T-cell (primary cell): ENCODE measurements at regions of chr11 and their contacts with region 1.

Region 1: DNA sequence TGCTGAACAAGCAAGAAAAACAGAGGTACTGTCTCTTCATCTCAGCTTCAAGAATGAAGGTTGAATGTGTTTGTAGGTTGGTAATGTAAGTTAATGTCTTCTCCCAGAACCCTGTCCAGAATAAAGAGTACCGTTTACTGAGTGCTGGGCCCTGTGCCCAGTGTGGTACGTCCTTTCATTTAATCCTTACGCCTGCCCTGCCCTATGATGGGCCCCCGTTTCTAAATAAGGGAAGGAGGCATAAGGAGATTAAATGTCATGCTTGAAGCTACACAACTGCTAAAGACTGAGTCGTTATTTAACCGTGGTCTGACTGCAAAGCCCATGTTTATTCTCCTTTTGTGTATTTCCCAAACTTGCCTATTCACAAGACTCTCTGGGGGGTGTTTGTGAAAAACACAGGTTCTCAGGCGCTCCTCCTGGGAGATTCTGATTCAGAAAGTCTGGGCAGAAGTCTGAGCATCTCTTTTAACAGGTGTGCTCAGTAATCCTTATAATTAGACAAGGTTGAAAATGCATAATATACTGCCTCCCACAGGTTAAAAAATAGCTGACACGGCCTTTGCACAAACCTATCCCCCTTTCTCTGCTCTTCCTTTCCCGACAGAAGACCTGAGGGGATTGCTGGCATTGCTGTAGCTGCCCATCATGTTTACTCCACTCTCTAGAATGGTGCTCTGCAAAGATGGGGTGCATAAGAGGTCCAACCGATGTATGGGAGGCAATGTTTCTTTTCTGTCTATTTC is 56.3 kb upstream of the ZBTB44 start:
- DNase-seq: peak in 1 of 35 experiments; percentile 14
- ATAC-seq: no peak
- H3K4me3 ChIP-seq: no peak overlapping the region
- H3K4me3 Mint-ChIP-seq: no peak overlapping the region
- H3K27ac ChIP-seq: no peak overlapping the region
- H3K27ac Mint-ChIP-seq: no peak overlapping the region
- H3K4me1 ChIP-seq: no peaks in the 10 kb centered on the region
- H3K4me1 Mint-ChIP-seq: no peaks in the 10 kb centered on the region
- H3K27me3 ChIP-seq: peaks cover 0 to 5% of the 10 kb centered on the region in 2 experiments
- H3K27me3 Mint-ChIP-seq: peaks cover 3 to 10% of the 10 kb centered on the region in 2 donors

Region 2: DNA sequence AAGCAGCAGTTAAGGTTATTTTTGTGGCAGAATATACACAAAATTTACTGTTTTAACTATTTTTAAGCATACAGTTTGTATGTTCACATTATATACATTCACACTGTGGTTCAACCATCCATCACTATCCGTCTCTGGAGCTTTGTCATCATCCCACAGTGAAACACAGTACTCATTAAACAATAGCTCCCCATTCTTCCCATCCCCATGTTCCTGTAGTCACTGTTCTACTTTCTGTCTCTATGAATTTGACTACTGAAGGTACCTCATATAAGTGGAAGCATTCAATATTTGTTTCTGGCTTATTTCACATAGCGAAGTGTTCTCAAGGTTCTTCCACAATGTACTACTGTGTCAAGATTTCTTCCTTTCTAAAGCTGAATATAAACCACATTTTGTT is 88.9 kb before region 1 on chr11:
- CTCF ChIA-PET with region 1: interaction called in 1 of 2 experiments, 10 read pairs
- POLR2A ChIA-PET with region 1: no interaction called
- DNase-seq: no peak
- ATAC-seq: no peak
- H3K4me3 ChIP-seq: no peak overlapping the region
- H3K4me3 Mint-ChIP-seq: no peak overlapping the region
- H3K27ac ChIP-seq: no peak overlapping the region
- H3K27ac Mint-ChIP-seq: no peak overlapping the region
- H3K4me1 ChIP-seq: no peaks in the 10 kb centered on the region
- H3K4me1 Mint-ChIP-seq: peaks cover 19 to 24% (median 22%) of the 10 kb centered on the region in 3 donors
- H3K27me3 ChIP-seq: no peaks in the 10 kb centered on the region
- H3K27me3 Mint-ChIP-seq: no peaks in the 10 kb centered on the region

Region 3: GRCh38 chr11:130400781-130401483 is 29.9 kb after region 1 on chr11:
- CTCF ChIA-PET with region 1: no interaction called
- POLR2A ChIA-PET with region 1: no interaction called
- DNase-seq: no peak
- ATAC-seq: no peak
- H3K4me3 ChIP-seq: no peak overlapping the region
- H3K4me3 Mint-ChIP-seq: no peak overlapping the region
- H3K27ac ChIP-seq: no peak overlapping the region
- H3K27ac Mint-ChIP-seq: peak overlapping the region in 1 of 2 donors; percentile 34
- H3K4me1 ChIP-seq: peaks cover 0 to 9% of the 10 kb centered on the region in 2 experiments
- H3K4me1 Mint-ChIP-seq: peaks cover 12 to 15% (median 12%) of the 10 kb centered on the region in 3 donors
- H3K27me3 ChIP-seq: peaks cover 0 to 37% of the 10 kb centered on the region in 2 experiments
- H3K27me3 Mint-ChIP-seq: peaks cover 20 to 38% of the 10 kb centered on the region in 2 donors

Region 4: DNA sequence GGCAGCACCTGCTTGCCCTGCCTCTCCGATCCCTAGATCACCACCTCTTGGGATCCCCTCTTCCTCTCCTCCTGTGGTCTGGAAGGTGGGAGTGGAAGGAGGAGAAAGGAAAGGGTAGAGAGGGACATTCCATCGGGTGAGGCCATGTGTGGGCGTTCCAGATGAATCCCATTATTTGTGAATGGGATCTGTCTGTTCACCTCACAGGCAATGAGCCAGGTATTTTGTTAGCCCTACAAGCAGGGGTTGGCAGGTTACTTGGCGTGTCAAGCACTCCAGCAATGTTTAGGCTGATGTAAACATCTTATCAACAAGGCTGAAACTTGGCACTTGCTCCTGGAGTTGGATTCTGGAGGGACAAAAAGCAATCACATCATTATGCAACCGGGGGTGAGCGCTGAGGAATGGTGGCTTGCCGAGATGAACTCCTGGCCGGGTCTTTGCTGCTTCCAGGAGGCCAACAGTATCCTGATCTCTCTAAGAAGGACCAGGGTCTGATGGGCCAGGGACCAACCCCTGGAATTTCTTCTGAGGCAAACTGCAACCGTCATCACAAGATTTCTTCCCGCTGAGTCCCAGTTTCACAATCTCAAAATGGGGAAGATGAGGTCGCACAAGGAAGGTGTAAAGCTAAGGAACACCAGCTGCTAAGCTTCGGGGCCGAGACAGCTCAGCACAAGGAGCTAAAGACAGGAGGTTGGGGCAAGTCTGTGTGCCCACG is 49.6 kb after region 1 on chr11:
- CTCF ChIA-PET with region 1: no interaction called
- POLR2A ChIA-PET with region 1: no interaction called
- DNase-seq: no peak
- ATAC-seq: no peak
- H3K4me3 ChIP-seq: no peak overlapping the region
- H3K4me3 Mint-ChIP-seq: no peak overlapping the region
- H3K27ac ChIP-seq: no peak overlapping the region
- H3K27ac Mint-ChIP-seq: no peak overlapping the region
- H3K4me1 ChIP-seq: no peaks in the 10 kb centered on the region
- H3K4me1 Mint-ChIP-seq: no peaks in the 10 kb centered on the region
- H3K27me3 ChIP-seq: peaks cover 0 to 61% of the 10 kb centered on the region in 2 experiments
- H3K27me3 Mint-ChIP-seq: peaks cover 28 to 51% of the 10 kb centered on the region in 2 donors